K562 (cell line): ENCODE measurements at regions of chr16 and their contacts with region 1.

Region 1: DNA sequence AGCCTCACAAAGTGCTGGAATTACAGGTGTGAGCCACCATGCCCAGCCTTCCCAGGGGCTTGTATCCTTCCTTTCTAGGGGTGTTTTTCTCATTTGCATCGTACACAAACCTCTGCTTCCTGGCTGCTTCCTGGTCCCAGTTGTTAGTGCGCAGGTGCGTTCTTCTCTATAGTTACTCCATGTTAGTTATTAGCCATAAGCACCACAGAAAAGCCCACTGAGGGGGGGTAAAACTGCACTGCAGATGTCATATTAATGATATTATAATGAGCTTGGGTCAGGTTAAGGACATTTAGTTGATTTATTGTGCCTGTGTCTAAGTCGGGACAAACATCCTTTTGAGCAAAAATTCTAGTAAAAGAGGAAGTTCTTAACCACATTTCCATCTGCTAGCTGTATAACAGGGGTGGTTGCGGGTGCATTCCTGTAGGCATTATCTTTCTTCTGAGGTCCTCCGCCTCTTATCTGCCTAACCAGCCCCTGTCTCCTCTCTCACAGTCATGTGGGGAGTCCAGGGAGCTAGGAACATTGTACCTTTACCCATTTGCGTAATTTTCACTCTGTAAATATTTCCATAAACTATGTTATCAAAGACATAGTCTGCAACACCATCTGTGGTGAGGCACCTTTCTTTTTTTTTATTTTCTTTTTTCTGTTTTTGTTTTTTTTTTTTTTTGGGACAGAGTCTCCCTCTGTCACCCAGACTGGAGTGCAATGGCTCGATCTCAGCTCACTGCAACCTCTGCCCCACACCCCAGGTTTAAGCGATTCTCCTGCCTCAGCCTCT is 23.6 kb upstream of the ATF7IP2 start:
- DNase-seq: peak; percentile 77 to 95 (median 85)
- ATAC-seq: peak; percentile 97
- H3K4me3 ChIP-seq: no peak overlapping the region
- H3K27ac ChIP-seq: peak overlapping the region; percentile 86
- H3K4me1 ChIP-seq: peaks cover 14 to 37% of the 10 kb centered on the region in 2 experiments
- H3K27me3 ChIP-seq: no peaks in the 10 kb centered on the region
- CTCF ChIP-seq: no peak
- EP300 ChIP-seq: peak; percentile 99
- POLR2A ChIP-seq: peak; percentile 57
- RAD21 ChIP-seq: peak in 1 of 2 experiments; percentile 38

Region 2: GRCh38 chr16:10325783-10326543 is 36.3 kb before region 1 on chr16:
- CTCF ChIA-PET with region 1: no interaction called
- POLR2A ChIA-PET with region 1: no interaction called
- in situ Hi-C with region 1: no loop called
- intact Hi-C with region 1: loop called (anchors 5 kb)
- DNase-seq: peak in 1 of 4 experiments; percentile 59
- ATAC-seq: peak; percentile 42
- H3K4me3 ChIP-seq: no peak overlapping the region
- H3K27ac ChIP-seq: peak overlapping the region; percentile 70
- H3K4me1 ChIP-seq: peaks cover 21 to 34% of the 10 kb centered on the region in 2 experiments; a peak in 4 of 5 replicates
- H3K27me3 ChIP-seq: no peaks in the 10 kb centered on the region
- CTCF ChIP-seq: no peak
- EP300 ChIP-seq: no peak
- POLR2A ChIP-seq: no peak
- RAD21 ChIP-seq: no peak

Region 3: GRCh38 chr16:10385725-10386516 is 23.7 kb after region 1 on chr16 and contains the start of gene ATF7IP2:
- CTCF ChIA-PET with region 1: no interaction called
- POLR2A ChIA-PET with region 1: interaction called, 16 read pairs
- in situ Hi-C with region 1: no loop called
- intact Hi-C with region 1: loop called (anchors 1 kb)
- DNase-seq: peak; percentile 96 to 97 (median 96)
- ATAC-seq: peak; percentile 91
- H3K4me3 ChIP-seq: peak within 1 kb of the TSS; percentile 76
- H3K27ac ChIP-seq: peak within 1 kb of the TSS; percentile 92
- H3K4me1 ChIP-seq: peaks cover 18 to 31% of the 10 kb centered on the region in 2 experiments; a peak in 4 of 5 replicates
- H3K27me3 ChIP-seq: no peaks in the 10 kb centered on the region
- CTCF ChIP-seq: no peak
- EP300 ChIP-seq: peak; percentile 29; the same call in 1 of the 2 replicates
- POLR2A ChIP-seq: peak; percentile 99
- RAD21 ChIP-seq: peak in 1 of 2 experiments; percentile 16; a peak in 1 of 4 replicates
- polyA plus RNA-seq, gene ATF7IP2: 352 to 511 TPM

Region 4: GRCh38 chr16:10501016-10501607 is 138.8 kb after region 1 on chr16:
- CTCF ChIA-PET with region 1: no interaction called
- POLR2A ChIA-PET with region 1: no interaction called
- in situ Hi-C with region 1: no loop called
- intact Hi-C with region 1: loop called (anchors 2 kb)
- DNase-seq: peak; percentile 40 to 90 (median 63)
- ATAC-seq: peak; percentile 84
- H3K4me3 ChIP-seq: no peak overlapping the region
- H3K27ac ChIP-seq: peak overlapping the region; percentile 50
- H3K4me1 ChIP-seq: peaks cover 6 to 17% of the 10 kb centered on the region in 2 experiments
- H3K27me3 ChIP-seq: no peaks in the 10 kb centered on the region
- CTCF ChIP-seq: peak; percentile 19 to 44 (median 33); a peak in 4 of 6 replicates
- EP300 ChIP-seq: peak; percentile 88
- POLR2A ChIP-seq: no peak
- RAD21 ChIP-seq: peak in 1 of 2 experiments; percentile 9; a peak in 1 of 4 replicates